Mammary epithelial cell (primary cell): ENCODE measurements at regions of chr20 and their contacts with region 1.

Region 1: DNA sequence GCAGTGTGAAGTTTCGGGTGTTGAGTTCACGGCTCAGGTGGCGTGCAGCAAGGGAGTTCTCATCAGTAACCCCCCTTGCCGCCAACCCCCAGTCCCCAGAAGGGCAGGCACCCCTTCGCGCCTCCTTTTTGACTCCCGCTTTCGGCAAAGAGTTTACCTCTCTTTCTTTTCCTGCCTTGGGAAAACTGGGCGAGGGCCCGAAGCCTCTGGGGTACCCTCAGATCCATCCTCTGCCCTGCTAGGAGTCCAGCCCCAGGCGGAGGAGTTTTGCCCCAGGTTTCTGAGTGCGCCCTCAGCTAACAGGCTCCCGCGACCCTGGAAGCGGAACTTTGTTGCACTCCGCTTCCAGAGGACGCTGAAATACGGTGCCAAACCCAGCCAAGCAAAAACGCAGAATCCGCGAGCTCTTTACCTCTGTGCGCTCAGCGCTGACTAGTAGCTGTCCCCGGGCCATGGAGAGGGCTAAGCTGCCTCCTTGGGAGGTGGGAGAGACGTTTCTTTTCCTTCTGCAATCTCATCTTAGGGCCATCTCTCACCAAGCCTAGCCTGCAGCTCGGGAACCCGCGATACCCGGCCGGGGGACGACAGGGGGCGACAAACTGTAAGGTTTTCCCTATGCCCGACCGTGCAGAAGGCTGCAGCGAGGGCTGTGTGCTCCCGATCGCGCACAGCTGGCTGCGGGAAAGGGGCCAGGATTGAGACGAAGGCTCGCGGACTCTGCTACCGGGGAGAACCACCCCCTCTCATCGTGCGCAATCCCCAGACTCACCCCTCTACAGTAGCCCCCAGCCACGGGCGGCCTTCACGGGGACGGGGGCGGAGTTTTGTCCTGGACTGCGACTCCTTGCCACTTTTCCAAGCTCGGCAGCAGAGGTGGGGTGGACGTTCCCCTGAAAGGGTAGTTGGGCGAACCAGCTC is 2.7 kb upstream of the PAX1 start:
- DNase-seq: peak; percentile 40
- H3K4me3 ChIP-seq: peak overlapping the region in 2 of 3 experiments; percentile 15 to 18
- H3K27ac ChIP-seq: no peak overlapping the region
- H3K4me1 ChIP-seq: peaks cover 4% of the 10 kb centered on the region
- H3K27me3 ChIP-seq: peaks cover 61% of the 10 kb centered on the region
- CTCF ChIP-seq: peak; percentile 60 to 64

Region 2: GRCh38 chr20:21656308-21657073 is 46.3 kb before region 1 on chr20:
- CTCF ChIA-PET with region 1: no interaction called
- dilution Hi-C with region 1: no loop called
- in situ Hi-C with region 1: no loop called
- intact Hi-C with region 1: no loop called
- DNase-seq: no peak
- H3K4me3 ChIP-seq: no peak overlapping the region
- H3K27ac ChIP-seq: no peak overlapping the region
- H3K4me1 ChIP-seq: no peaks in the 10 kb centered on the region
- H3K27me3 ChIP-seq: no peaks in the 10 kb centered on the region
- CTCF ChIP-seq: no peak

Region 3: GRCh38 chr20:21767739-21768223 is 65.0 kb after region 1 on chr20:
- CTCF ChIA-PET with region 1: no interaction called
- dilution Hi-C with region 1: no loop called
- in situ Hi-C with region 1: loop called in 1 of 2 experiments (anchors 10 kb)
- intact Hi-C with region 1: no loop called
- DNase-seq: no peak
- H3K4me3 ChIP-seq: no peak overlapping the region
- H3K27ac ChIP-seq: no peak overlapping the region
- H3K4me1 ChIP-seq: no peaks in the 10 kb centered on the region
- H3K27me3 ChIP-seq: no peaks in the 10 kb centered on the region
- CTCF ChIP-seq: peak; percentile 2 to 18